PC-9 (cell line): ENCODE measurements at regions of chr13 and their contacts with region 1.

Region 1: GRCh38 chr13:83995930-83996329 is 113.7 kb upstream of the SLITRK1 start:
- DNase-seq: no peak
- H3K4me3 ChIP-seq: no peak overlapping the region
- H3K27ac ChIP-seq: no peak overlapping the region
- H3K4me1 ChIP-seq: no peaks in the 10 kb centered on the region
- H3K27me3 ChIP-seq: no peaks in the 10 kb centered on the region
- CTCF ChIP-seq: no peak

Region 2: GRCh38 chr13:83950293-83950692 is 45.6 kb before region 1 on chr13:
- CTCF ChIA-PET with region 1: no interaction called
- POLR2A ChIA-PET with region 1: no interaction called
- intact Hi-C with region 1: no loop called
- DNase-seq: no peak
- H3K4me3 ChIP-seq: no peak overlapping the region
- H3K27ac ChIP-seq: no peak overlapping the region
- H3K4me1 ChIP-seq: no peaks in the 10 kb centered on the region
- H3K27me3 ChIP-seq: no peaks in the 10 kb centered on the region
- CTCF ChIP-seq: no peak

Region 3: DNA sequence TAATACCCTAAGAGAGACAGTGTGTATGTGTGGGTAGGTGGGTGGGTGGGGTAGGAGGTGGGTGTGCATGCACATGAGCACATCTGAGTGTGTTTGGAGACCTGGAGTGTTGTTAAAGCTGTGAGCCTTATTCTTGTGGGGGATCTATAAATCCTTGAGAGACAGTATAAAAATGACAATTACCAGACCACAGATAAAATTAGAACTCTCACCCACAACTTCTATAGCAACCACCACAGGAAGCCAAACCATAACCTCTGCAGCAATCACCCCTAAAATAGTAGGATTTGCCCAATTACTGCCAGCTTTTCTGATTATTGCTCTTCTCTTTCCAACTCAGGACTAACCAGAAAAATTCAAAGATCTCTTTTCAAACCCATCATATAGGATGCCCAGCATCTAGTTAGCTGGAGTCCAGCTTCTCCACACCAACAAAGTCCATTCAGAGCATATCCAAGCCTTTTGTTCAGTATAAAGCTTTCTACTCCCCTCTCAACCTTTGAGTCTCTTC is 20.2 kb before region 1 on chr13:
- CTCF ChIA-PET with region 1: no interaction called
- POLR2A ChIA-PET with region 1: no interaction called
- intact Hi-C with region 1: loop called (anchors 1 kb)
- DNase-seq: no peak
- H3K4me3 ChIP-seq: no peak overlapping the region
- H3K27ac ChIP-seq: no peak overlapping the region
- H3K4me1 ChIP-seq: no peaks in the 10 kb centered on the region
- H3K27me3 ChIP-seq: no peaks in the 10 kb centered on the region
- CTCF ChIP-seq: no peak

Region 4: DNA sequence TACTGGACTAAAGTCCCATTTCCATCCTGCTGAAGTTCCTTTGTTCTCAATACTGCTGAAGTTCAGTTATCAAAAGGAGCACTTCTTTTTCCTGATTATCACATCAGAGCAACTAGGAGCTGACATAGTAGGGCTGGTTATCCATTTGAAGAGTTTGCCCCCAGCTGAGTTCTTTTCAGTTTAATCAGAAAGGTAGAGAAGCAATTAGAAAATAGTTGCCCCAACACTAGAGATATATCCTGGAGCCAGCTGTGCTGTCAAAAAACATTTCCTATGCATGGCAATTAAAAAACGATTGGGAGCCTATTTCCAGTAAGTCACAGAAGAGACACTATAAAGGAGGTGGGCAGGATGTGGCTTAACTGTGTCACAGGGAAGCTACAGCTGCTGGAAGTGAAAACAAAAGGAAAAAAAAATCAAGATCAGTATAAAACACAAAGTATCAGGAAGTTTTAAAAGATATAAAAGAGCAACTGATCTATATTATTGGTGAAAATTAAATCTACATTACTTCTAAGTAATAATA is 42.1 kb after region 1 on chr13:
- CTCF ChIA-PET with region 1: no interaction called
- POLR2A ChIA-PET with region 1: no interaction called
- intact Hi-C with region 1: no loop called
- DNase-seq: no peak
- H3K4me3 ChIP-seq: no peak overlapping the region
- H3K27ac ChIP-seq: no peak overlapping the region
- H3K4me1 ChIP-seq: no peaks in the 10 kb centered on the region
- H3K27me3 ChIP-seq: no peaks in the 10 kb centered on the region
- CTCF ChIP-seq: no peak